ENCODE measurements at regions of chr1 and their contacts with region 1.

Region 1: DNA sequence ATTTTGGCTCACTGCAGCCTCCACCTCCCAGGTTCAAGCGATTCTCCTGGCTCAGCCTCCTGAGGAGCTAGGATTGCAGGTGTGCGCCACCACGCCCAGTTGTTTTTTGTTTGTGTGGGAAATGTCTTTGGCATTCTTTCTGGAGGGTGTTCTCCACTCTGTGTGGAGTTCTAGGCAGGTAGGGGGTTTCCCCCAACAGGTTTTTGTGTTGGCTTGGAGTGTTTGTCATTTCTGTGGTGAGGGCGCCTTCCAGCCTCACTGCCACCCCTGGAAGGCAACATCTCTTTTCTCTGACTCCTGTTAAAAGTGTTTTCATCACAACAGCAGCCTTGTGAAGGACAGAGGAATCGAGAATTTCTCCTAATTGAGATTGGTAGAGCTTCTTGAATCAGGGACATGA is 69.6 kb downstream of the PRKCZ start:
- DNase-seq: no peak
- H3K4me3 ChIP-seq: no peak overlapping the region
- H3K27ac ChIP-seq: no peak overlapping the region
- H3K4me1 ChIP-seq: no peaks in the 10 kb centered on the region
- H3K27me3 ChIP-seq: no peaks in the 10 kb centered on the region
- CTCF ChIP-seq: no peak
- POLR2A ChIP-seq: no peak

Region 2: GRCh38 chr1:1594602-1595260 is 525.1 kb before region 1 on chr1:
- CTCF ChIA-PET with region 1: no interaction called
- POLR2A ChIA-PET with region 1: no interaction called
- dilution Hi-C with region 1: no loop called
- intact Hi-C with region 1: no loop called
- DNase-seq: no peak
- H3K4me3 ChIP-seq: no peak overlapping the region
- H3K27ac ChIP-seq: no peak overlapping the region
- H3K4me1 ChIP-seq: no peaks in the 10 kb centered on the region
- H3K27me3 ChIP-seq: peaks cover 14 to 22% of the 10 kb centered on the region in 2 experiments
- CTCF ChIP-seq: no peak
- POLR2A ChIP-seq: no peak

Region 3: DNA sequence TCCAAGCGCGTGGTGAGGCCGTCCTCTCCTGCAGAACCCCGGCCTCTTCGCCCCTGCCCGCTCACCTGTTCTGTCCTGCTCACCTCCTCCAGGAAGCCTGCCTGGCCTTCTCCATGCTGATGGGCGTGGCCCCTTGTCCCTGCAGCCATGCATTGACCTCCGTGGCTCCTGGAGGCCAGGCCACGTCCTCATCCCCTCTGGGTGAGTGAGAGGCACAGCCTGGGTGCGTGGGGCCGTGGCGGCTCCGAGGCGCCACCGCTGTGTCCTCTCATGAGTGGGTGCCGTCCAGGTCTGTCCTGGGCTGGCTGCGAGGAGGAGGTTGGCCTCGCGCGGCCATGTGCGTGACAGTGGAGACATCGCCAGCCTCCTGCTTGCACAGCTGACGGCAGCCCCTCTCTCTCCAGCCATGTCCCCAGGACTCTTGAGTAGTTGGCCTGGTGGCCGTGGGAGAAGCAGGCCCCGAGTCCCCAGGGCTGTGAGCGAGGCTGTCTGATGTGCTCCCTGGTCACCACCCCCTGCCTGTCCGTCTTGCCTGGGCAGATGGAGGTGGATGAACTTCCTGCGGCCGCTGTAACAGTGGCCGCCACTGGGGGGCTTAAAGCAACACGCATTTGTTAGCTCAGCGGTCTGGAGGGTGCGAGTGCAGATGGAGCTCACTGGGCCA is 11.5 kb before region 1 on chr1:
- CTCF ChIA-PET with region 1: no interaction called
- POLR2A ChIA-PET with region 1: no interaction called
- dilution Hi-C with region 1: no loop called
- intact Hi-C with region 1: no loop called
- DNase-seq: no peak
- H3K4me3 ChIP-seq: no peak overlapping the region
- H3K27ac ChIP-seq: no peak overlapping the region
- H3K4me1 ChIP-seq: no peaks in the 10 kb centered on the region
- H3K27me3 ChIP-seq: no peaks in the 10 kb centered on the region
- CTCF ChIP-seq: peak; percentile 23 to 33
- POLR2A ChIP-seq: no peak

Region 4: GRCh38 chr1:2141036-2141435 is 21.2 kb after region 1 on chr1:
- CTCF ChIA-PET with region 1: interaction called, 12 read pairs
- POLR2A ChIA-PET with region 1: no interaction called
- dilution Hi-C with region 1: no loop called
- intact Hi-C with region 1: no loop called
- DNase-seq: no peak
- H3K4me3 ChIP-seq: no peak overlapping the region
- H3K27ac ChIP-seq: no peak overlapping the region
- H3K4me1 ChIP-seq: no peaks in the 10 kb centered on the region
- H3K27me3 ChIP-seq: no peaks in the 10 kb centered on the region
- CTCF ChIP-seq: no peak
- POLR2A ChIP-seq: no peak

Measured in endothelial cell of umbilical vein (primary cell).